Caco-2 (cell line): ENCODE measurements at regions of chr14 and their contacts with region 1.

Region 1: DNA sequence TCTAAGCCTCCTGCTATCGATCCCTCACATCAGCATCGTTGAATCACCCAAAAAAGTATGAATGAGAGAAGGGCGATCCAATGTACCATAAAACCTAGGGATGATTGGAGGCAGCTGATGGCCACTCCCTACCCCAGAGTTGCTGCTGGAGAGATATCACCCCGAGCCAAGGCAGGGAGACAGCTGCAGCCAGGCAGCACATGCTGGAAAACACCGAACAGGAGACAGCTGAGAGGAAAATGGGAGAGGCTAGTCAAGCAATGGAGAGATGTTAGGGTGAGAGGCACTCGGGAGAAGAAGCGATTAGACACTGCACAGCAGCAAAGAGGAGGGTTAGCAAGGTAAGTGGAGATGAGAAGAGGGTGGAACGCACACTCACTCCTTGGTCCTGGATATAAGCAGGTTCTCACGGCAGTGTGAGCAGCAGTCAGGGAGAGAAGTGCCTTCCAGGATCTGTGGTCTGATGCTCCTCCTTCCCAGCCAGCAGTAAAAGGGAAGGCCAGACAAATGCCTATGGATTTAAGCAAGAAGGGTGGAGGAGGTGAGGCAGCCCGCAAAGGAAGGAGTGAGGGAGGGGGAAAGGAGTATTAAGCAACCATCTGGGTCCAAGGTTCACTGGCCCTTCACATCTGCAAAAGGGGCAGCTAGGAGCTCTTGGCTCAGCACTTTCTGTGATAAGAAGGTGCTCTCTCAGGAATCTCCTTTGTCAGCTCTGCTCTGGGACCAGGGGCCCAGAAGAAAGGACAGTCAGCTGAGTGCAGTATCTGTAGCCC is at the start of gene SLC7A7:
- DNase-seq: peak; percentile 87 to 91
- H3K4me3 ChIP-seq: peak within 1 kb of the TSS; percentile 48
- H3K4me3 Mint-ChIP-seq: peak within 1 kb of the TSS; percentile 89
- H3K27ac Mint-ChIP-seq: peak within 1 kb of the TSS; percentile 70
- H3K4me1 ChIP-seq: peaks cover 54% of the 10 kb centered on the region
- H3K4me1 Mint-ChIP-seq: peaks cover 43% of the 10 kb centered on the region
- H3K27me3 ChIP-seq: no peaks in the 10 kb centered on the region
- H3K27me3 Mint-ChIP-seq: no peaks in the 10 kb centered on the region
- CTCF ChIP-seq: no peak
- total RNA-seq, gene SLC7A7: 380 and 443 TPM in 2 replicates

Region 2: DNA sequence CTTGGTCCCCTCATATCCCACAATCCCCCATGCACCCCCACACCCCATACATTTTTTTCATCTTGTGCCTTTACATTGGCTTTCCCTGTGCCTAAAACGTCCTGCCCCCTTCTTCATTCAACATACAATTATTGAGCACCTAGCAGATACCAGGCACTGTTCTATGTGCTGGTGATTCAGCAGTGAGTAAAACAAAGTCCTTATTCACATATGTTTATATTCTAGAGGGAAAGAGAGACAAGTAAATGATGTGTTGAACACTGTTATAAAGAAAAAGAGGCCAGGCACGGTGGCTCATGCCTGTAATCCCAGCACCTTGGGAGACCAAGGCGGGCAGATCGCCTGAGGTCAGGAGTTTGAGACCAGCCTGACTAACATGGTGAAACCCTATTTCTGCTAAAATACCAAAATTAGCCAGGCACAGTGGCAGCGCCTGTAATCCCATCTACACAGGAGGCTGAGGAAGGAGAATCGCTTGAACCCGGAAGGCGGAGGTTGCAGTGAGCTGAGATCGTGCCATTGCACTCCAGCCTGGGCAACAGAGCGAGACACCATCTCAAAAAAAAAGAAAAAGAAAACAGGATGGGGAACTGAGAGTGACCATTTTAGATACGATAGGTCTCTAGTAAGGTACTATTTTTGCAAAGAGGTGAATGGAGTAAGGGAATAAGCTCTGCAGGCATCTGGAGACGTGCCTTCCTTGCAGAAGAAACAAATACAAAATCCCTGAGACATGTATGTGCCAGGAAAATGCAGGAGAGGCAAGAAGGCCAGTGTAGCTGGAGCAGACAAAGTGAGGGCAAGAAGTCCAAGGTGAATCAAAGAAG is 12.1 kb before region 1 on chr14:
- CTCF ChIA-PET with region 1: interaction called, 5 read pairs
- POLR2A ChIA-PET with region 1: interaction called, 15 read pairs
- intact Hi-C with region 1: loop called (anchors 1 kb)
- DNase-seq: no peak
- H3K4me3 ChIP-seq: no peak overlapping the region
- H3K4me3 Mint-ChIP-seq: no peak overlapping the region
- H3K27ac Mint-ChIP-seq: peak overlapping the region; percentile 62
- H3K4me1 ChIP-seq: peaks cover 67% of the 10 kb centered on the region
- H3K4me1 Mint-ChIP-seq: peaks cover 73% of the 10 kb centered on the region
- H3K27me3 ChIP-seq: no peaks in the 10 kb centered on the region
- H3K27me3 Mint-ChIP-seq: no peaks in the 10 kb centered on the region
- CTCF ChIP-seq: no peak

Region 3: GRCh38 chr14:22836301-22837113 is 21.4 kb after region 1 on chr14 and contains the start of gene MMP14:
- CTCF ChIA-PET with region 1: interaction called, 5 read pairs
- POLR2A ChIA-PET with region 1: interaction called, 12 read pairs
- intact Hi-C with region 1: no loop called
- DNase-seq: peak; percentile 71 to 77
- H3K4me3 ChIP-seq: peak within 1 kb of the TSS; percentile 74
- H3K4me3 Mint-ChIP-seq: peak within 1 kb of the TSS; percentile 85
- H3K27ac Mint-ChIP-seq: peak within 1 kb of the TSS; percentile 87
- H3K4me1 ChIP-seq: peaks cover 16% of the 10 kb centered on the region
- H3K4me1 Mint-ChIP-seq: peaks cover 17% of the 10 kb centered on the region
- H3K27me3 ChIP-seq: no peaks in the 10 kb centered on the region
- H3K27me3 Mint-ChIP-seq: no peaks in the 10 kb centered on the region
- CTCF ChIP-seq: peak; percentile 50 to 75
- total RNA-seq, gene MMP14: 57.2 and 62.9 TPM in 2 replicates

Region 4: GRCh38 chr14:23195550-23196101 is 380.5 kb after region 1 on chr14:
- CTCF ChIA-PET with region 1: no interaction called
- POLR2A ChIA-PET with region 1: no interaction called
- intact Hi-C with region 1: no loop called
- DNase-seq: no peak
- H3K4me3 ChIP-seq: no peak overlapping the region
- H3K4me3 Mint-ChIP-seq: no peak overlapping the region
- H3K27ac Mint-ChIP-seq: no peak overlapping the region
- H3K4me1 ChIP-seq: peaks cover 20% of the 10 kb centered on the region
- H3K4me1 Mint-ChIP-seq: no peaks in the 10 kb centered on the region
- H3K27me3 ChIP-seq: no peaks in the 10 kb centered on the region
- H3K27me3 Mint-ChIP-seq: no peaks in the 10 kb centered on the region
- CTCF ChIP-seq: no peak